ENCODE measurements at regions of chr13 and their contacts with region 1.

Region 1: GRCh38 chr13:24020375-24020830 is 123.1 kb upstream of the C1QTNF9B start:
- DNase-seq: no peak
- H3K4me3 Mint-ChIP-seq: no peak overlapping the region
- H3K27ac Mint-ChIP-seq: no peak overlapping the region
- H3K4me1 Mint-ChIP-seq: peaks cover 6% of the 10 kb centered on the region
- H3K27me3 Mint-ChIP-seq: peaks cover 1% of the 10 kb centered on the region

Region 2: DNA sequence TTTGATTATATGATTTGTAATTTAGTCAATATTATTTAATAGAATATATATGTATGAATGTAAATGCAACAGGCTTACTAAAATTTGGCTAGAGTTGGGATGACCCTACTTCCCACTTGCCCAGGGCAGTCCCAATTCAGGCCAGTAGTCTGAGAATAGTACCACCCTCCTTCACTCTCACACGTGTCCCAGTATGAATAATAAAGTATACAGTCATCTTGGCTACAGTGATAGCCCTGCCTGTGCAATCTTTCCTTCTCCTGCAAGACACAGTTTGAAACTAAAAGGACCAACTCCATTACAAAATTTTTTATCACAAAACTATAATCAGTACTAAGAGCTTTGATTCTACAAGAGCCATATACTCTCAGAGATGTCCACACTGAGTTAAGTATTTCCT is 663.1 kb before region 1 on chr13:
- intact Hi-C with region 1: no loop called
- DNase-seq: no peak
- H3K4me3 Mint-ChIP-seq: no peak overlapping the region
- H3K27ac Mint-ChIP-seq: no peak overlapping the region
- H3K4me1 Mint-ChIP-seq: no peaks in the 10 kb centered on the region
- H3K27me3 Mint-ChIP-seq: no peaks in the 10 kb centered on the region

Region 3: DNA sequence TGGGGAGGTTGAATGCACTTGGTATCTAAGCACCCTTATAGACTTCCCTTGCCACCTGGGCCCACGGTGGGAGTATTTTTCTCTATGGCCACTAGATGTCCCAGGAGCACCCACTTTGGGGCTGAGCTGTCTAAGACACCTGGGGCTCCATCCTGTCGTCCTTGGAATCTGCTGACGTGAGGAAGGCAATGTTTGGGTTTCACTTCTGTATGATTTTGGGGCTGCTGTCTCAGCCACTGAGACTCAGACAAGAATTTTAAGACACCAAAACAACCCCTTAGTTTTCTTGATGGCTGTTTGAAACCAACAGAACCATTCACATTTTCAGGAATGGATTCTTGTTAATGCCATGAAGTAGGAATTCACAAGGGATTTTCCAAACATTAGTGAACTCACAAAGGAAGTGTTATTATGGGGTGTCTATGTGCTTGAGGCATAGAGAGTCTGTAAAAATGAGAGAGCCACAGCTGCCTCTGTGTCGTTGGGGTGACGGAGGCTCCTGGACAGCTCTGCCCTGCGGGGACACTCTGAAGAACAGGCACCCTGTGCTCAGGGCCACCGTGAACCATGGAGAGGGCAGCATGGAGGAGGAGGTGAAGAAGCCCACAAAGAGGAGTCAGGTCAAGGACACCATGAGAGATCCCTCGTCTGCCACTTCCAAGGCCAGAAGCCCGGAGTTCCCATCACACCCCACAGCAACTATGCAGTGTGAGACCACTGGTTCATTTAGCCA is 33.3 kb after region 1 on chr13:
- intact Hi-C with region 1: loop called (anchors 1 kb)
- DNase-seq: peak; percentile 55
- H3K4me3 Mint-ChIP-seq: no peak overlapping the region
- H3K27ac Mint-ChIP-seq: no peak overlapping the region
- H3K4me1 Mint-ChIP-seq: peaks cover 20% of the 10 kb centered on the region
- H3K27me3 Mint-ChIP-seq: peaks cover 15% of the 10 kb centered on the region

Measured in activated T-helper 1 cell treated with anti-CD3 and anti-CD28 coated beads, Interleukin-12 subunit alpha, Interleukin-12 subunit beta, Interleukin-2, Interleukin-4 antibody, amounts not matched to agents 30 ng/mL and 10 ng/mL and 1 ng/mL, durations not matched to agents 14 hours and 24 hours and 36 hours (primary cell).